Naive thymus-derived CD4-positive, alpha-beta T cell (primary cell): ENCODE measurements at regions of chr3 and their contacts with region 1.

Region 1: GRCh38 chr3:128680602-128681368 is 30.2 kb upstream of the RPN1 start:
- DNase-seq: peak; percentile 94 to 98 (median 95)
- ATAC-seq: peak; percentile 95
- H3K4me3 ChIP-seq: peak overlapping the region; percentile 91
- H3K4me3 Mint-ChIP-seq: peak overlapping the region; percentile 84 to 98 (median 94)
- H3K27ac ChIP-seq: peak overlapping the region; percentile 92
- H3K27ac Mint-ChIP-seq: peak overlapping the region; percentile 95 to 100 (median 99)
- H3K4me1 ChIP-seq: peaks cover 11 to 14% of the 10 kb centered on the region in 2 donors
- H3K4me1 Mint-ChIP-seq: peaks cover 17 to 50% (median 38%) of the 10 kb centered on the region in 7 donors
- H3K27me3 ChIP-seq: no peaks in the 10 kb centered on the region
- H3K27me3 Mint-ChIP-seq: no peaks in the 10 kb centered on the region

Region 2: GRCh38 chr3:128369864-128370642 is 310.7 kb before region 1 on chr3:
- CTCF ChIA-PET with region 1: no interaction called
- POLR2A ChIA-PET with region 1: no interaction called
- intact Hi-C with region 1: no loop called
- DNase-seq: no peak
- ATAC-seq: no peak
- H3K4me3 ChIP-seq: no peak overlapping the region
- H3K4me3 Mint-ChIP-seq: no peak overlapping the region
- H3K27ac ChIP-seq: no peak overlapping the region
- H3K27ac Mint-ChIP-seq: peak overlapping the region in 1 of 9 donors; percentile 49
- H3K4me1 ChIP-seq: no peaks in the 10 kb centered on the region
- H3K4me1 Mint-ChIP-seq: peaks cover 0 to 9% (median 4%) of the 10 kb centered on the region in 7 donors
- H3K27me3 ChIP-seq: no peaks in the 10 kb centered on the region
- H3K27me3 Mint-ChIP-seq: no peaks in the 10 kb centered on the region

Region 3: GRCh38 chr3:128650096-128651050 is 30.4 kb before region 1 on chr3 and contains the start of gene RPN1:
- CTCF ChIA-PET with region 1: interaction called, 8 read pairs
- POLR2A ChIA-PET with region 1: interaction called, 25 read pairs
- intact Hi-C with region 1: loop called (anchors 1 kb)
- DNase-seq: peak; percentile 81 to 98 (median 97)
- ATAC-seq: peak; percentile 98
- H3K4me3 ChIP-seq: peak within 1 kb of the TSS; percentile 94
- H3K4me3 Mint-ChIP-seq: peak within 1 kb of the TSS; percentile 83 to 92 (median 90)
- H3K27ac ChIP-seq: peak within 1 kb of the TSS; percentile 99
- H3K27ac Mint-ChIP-seq: peak within 1 kb of the TSS; percentile 73 to 94 (median 92)
- H3K4me1 ChIP-seq: peaks cover 12 to 17% of the 10 kb centered on the region in 2 donors
- H3K4me1 Mint-ChIP-seq: peaks cover 25 to 43% (median 37%) of the 10 kb centered on the region in 7 donors
- H3K27me3 ChIP-seq: no peaks in the 10 kb centered on the region
- H3K27me3 Mint-ChIP-seq: no peaks in the 10 kb centered on the region
- total RNA-seq, gene RPN1: 76.7 to 203 (median 88.5) TPM

Region 4: DNA sequence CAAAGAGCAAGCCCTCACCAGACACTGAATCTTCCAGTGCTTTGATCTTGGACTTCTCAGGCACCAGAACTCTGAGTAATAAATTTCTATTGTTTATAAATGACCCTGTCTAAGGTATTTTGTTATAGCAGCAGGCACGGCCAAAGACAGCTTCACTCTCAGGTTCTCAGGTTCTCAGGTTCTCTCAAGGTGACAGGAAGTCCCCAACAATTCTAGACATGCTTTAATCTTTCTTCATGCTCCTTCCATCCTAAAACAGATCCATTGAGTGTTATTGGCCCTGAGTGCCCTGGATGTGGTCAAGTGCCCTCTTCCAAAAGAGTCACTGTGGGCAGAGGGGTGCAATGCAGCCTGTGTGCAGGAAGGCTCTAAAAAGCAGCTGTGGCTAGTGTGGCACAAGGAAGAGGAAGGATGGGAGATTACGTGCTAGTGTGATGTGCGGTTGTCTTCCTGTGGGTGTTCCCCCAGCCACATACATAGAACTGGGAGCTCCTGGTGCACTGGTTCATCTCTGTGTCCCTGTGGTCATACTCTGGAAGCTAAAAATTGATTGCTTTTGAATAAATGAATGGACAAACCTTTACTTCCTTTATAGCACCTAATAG is 34.2 kb after region 1 on chr3:
- CTCF ChIA-PET with region 1: interaction called, 6 read pairs
- POLR2A ChIA-PET with region 1: interaction called, 18 read pairs
- intact Hi-C with region 1: loop called in 1 of 2 experiments (anchors 2 kb)
- DNase-seq: peak in 8 of 9 donors; percentile 30 to 53 (median 44)
- ATAC-seq: peak; percentile 94
- H3K4me3 ChIP-seq: no peak overlapping the region
- H3K4me3 Mint-ChIP-seq: peak overlapping the region; percentile 9 to 77 (median 68)
- H3K27ac ChIP-seq: peak overlapping the region; percentile 48
- H3K27ac Mint-ChIP-seq: peak overlapping the region; percentile 65 to 96 (median 90)
- H3K4me1 ChIP-seq: peaks cover 0 to 21% of the 10 kb centered on the region in 2 donors
- H3K4me1 Mint-ChIP-seq: peaks cover 8 to 40% (median 27%) of the 10 kb centered on the region in 7 donors
- H3K27me3 ChIP-seq: no peaks in the 10 kb centered on the region
- H3K27me3 Mint-ChIP-seq: peaks cover 0 to under 1% (median 0%) of the 10 kb centered on the region in 5 donors

Region 5: DNA sequence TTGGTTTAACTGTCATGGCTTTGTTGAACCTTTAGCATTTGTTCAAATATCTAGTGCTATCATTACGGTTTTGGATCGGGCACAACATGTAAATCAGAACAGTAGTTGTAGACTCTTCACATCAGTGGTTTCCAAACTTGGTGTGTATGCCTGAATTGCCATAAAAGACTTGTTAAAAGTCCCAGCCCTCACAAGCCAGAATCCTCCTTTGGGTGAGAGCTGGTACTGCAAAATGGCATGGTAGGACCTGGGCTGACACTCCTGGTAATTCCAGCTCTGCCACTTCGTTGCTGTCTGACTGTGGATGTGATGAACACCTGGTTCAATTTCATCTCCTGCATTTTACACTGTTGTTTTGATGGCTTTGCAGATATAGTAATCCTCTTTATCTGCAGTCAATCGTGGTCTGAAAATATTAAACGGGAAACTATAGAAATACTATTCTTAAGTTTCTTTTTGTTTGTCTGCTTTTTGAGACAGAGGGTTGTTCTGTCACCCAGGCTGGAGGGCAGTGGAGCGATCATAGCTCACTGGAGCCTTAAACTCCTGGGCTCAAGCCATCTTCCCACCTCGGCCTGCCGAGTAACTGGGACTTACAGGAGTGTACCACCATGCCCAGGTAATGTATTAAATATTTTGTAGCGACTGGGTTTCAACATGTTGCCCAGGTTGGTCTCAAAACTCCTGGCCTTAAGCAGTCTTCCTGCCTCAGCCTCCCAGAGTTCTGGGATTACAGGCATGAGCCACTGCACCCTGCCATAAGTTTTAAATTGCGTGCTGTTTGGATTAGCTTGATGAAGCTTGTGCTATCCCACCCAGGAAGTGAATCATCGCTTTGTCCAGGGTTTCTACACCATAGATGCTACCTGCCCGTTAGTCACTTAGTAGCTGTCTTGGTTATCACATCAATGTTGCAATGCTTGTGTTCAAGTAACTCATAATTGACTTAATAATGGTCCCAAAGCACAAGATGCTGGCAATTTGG is 106.8 kb after region 1 on chr3:
- CTCF ChIA-PET with region 1: interaction called, 24 read pairs
- POLR2A ChIA-PET with region 1: interaction called, 49 read pairs
- intact Hi-C with region 1: loop called in 1 of 2 experiments (anchors 1 kb)
- DNase-seq: peak in 5 of 9 donors; percentile 23 to 37 (median 30)
- ATAC-seq: peak; percentile 63
- H3K4me3 ChIP-seq: peak overlapping the region; percentile 8
- H3K4me3 Mint-ChIP-seq: peak overlapping the region; percentile 48 to 88 (median 84)
- H3K27ac ChIP-seq: peak overlapping the region; percentile 66
- H3K27ac Mint-ChIP-seq: peak overlapping the region; percentile 83 to 97 (median 96)
- H3K4me1 ChIP-seq: peaks cover 35 to 74% of the 10 kb centered on the region in 2 donors
- H3K4me1 Mint-ChIP-seq: peaks cover 67 to 98% (median 85%) of the 10 kb centered on the region in 7 donors
- H3K27me3 ChIP-seq: no peaks in the 10 kb centered on the region
- H3K27me3 Mint-ChIP-seq: no peaks in the 10 kb centered on the region

Region 6: DNA sequence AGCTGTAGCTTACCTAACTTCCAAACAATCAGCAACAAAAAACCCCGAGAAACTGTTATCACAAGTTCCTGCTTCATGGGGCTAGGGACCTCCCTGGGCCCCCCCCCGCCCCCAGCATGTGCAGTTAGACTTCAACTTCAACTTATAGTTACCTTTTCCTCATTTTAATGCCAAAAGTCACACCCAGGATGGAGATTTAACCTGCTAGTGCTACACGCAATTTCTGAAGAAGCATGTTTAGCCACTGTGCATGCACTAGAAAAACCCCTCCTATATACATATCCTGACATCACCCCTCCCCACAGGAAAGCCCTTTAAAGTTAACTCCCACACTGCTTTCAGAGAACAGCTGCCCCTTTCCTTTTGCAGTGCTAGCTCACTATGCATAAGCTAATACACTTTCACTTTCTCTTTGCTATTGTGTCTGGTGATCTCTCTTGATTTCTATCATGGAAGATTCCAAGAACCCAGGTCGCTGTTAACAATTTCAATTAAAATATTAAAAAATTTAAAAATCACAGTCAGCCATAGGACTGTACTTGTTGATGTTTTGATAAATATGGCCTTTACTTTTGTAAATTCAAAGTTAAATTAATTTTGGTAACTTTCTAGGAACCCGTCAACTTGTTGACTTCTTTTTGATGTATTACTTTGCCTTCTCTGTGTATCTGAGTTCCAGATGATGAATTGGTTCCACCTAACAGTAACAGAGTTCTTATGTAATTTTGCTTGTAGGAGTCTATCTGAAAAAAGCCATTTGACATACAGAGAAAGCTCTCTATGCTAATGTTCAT is 123.4 kb after region 1 on chr3:
- CTCF ChIA-PET with region 1: interaction called, 101 read pairs
- POLR2A ChIA-PET with region 1: interaction called, 79 read pairs
- intact Hi-C with region 1: loop called (anchors 1 kb)
- DNase-seq: peak in 8 of 9 donors; percentile 54 to 88 (median 84)
- ATAC-seq: peak; percentile 92
- H3K4me3 ChIP-seq: peak overlapping the region; percentile 49
- H3K4me3 Mint-ChIP-seq: peak overlapping the region; percentile 48 to 89 (median 80)
- H3K27ac ChIP-seq: peak overlapping the region; percentile 74
- H3K27ac Mint-ChIP-seq: peak overlapping the region; percentile 91 to 98 (median 96)
- H3K4me1 ChIP-seq: peaks cover 22 to 64% of the 10 kb centered on the region in 2 donors
- H3K4me1 Mint-ChIP-seq: peaks cover 59 to 91% (median 85%) of the 10 kb centered on the region in 7 donors
- H3K27me3 ChIP-seq: no peaks in the 10 kb centered on the region
- H3K27me3 Mint-ChIP-seq: no peaks in the 10 kb centered on the region

Region 7: GRCh38 chr3:128922804-128923459 is 242.1 kb after region 1 on chr3:
- CTCF ChIA-PET with region 1: interaction called, 5 read pairs
- POLR2A ChIA-PET with region 1: interaction called, 5 read pairs
- intact Hi-C with region 1: loop called (anchors 1 kb)
- DNase-seq: peak in 8 of 9 donors; percentile 60 to 73 (median 69)
- ATAC-seq: peak; percentile 73
- H3K4me3 ChIP-seq: peak overlapping the region; percentile 41
- H3K4me3 Mint-ChIP-seq: peak overlapping the region; percentile 75 to 87 (median 84)
- H3K27ac ChIP-seq: peak overlapping the region; percentile 63
- H3K27ac Mint-ChIP-seq: peak overlapping the region; percentile 75 to 96 (median 89)
- H3K4me1 ChIP-seq: peaks cover 13 to 23% of the 10 kb centered on the region in 2 donors
- H3K4me1 Mint-ChIP-seq: peaks cover 20 to 66% (median 52%) of the 10 kb centered on the region in 7 donors
- H3K27me3 ChIP-seq: no peaks in the 10 kb centered on the region
- H3K27me3 Mint-ChIP-seq: peaks cover 0 to 3% (median 0%) of the 10 kb centered on the region in 5 donors

Region 8: GRCh38 chr3:129183569-129184395 is 503.0 kb after region 1 on chr3 and contains the start of gene CNBP:
- CTCF ChIA-PET with region 1: no interaction called
- POLR2A ChIA-PET with region 1: no interaction called
- intact Hi-C with region 1: loop called in 1 of 2 experiments (anchors 1 kb)
- DNase-seq: peak; percentile 90 to 96 (median 94)
- ATAC-seq: peak; percentile 100
- H3K4me3 ChIP-seq: peak within 1 kb of the TSS; percentile 74
- H3K4me3 Mint-ChIP-seq: peak within 1 kb of the TSS; percentile 93 to 99 (median 96)
- H3K27ac ChIP-seq: peak within 1 kb of the TSS; percentile 100
- H3K27ac Mint-ChIP-seq: peak within 1 kb of the TSS; percentile 91 to 99 (median 97)
- H3K4me1 ChIP-seq: peaks cover 18 to 27% of the 10 kb centered on the region in 2 donors
- H3K4me1 Mint-ChIP-seq: peaks cover 32 to 48% (median 42%) of the 10 kb centered on the region in 7 donors
- H3K27me3 ChIP-seq: no peaks in the 10 kb centered on the region
- H3K27me3 Mint-ChIP-seq: no peaks in the 10 kb centered on the region
- total RNA-seq, gene CNBP: 259 to 366 (median 327) TPM